Activated B cell treated with CpG ODN at 0.5 μM for 24 hours (primary cell): ENCODE measurements at regions of chr5 and their contacts with region 1.

Region 1: DNA sequence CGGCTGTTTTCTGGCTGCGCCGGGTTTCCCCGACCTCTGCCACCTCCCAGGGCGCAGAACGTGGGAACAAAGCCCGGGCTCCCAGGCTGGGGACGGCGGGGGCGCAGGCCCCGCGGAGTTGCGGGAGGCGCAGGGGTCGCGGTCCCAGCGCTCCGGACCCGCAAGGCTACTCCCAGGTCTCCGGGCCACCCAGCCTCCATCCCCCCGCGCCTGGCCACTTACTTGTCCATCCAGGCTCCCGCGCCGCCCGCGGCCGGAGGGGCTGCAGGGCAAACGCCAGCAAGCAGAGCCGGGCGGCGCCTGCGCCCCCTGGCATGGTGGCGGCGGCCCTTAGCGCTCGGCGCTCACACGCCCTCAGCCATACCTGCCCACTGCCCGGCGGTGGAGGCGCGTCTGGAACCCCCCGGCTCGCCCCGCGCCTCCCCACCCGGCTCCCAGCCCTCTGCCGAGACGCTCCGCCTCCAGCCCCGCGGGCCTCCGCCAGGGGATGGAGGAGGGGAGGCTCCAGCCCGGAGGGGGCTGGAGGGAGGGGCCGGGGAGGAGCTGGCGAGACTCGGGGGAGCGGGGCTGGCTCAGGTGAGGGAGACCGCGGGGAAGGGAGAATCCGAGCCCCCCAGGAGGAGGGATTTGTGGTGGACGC is at the start of gene ADAM19:
- DNase-seq: peak; percentile 70
- ATAC-seq: peak; percentile 56
- H3K4me3 Mint-ChIP-seq: peak within 1 kb of the TSS; percentile 99
- H3K27ac Mint-ChIP-seq: peak within 1 kb of the TSS; percentile 95
- H3K4me1 Mint-ChIP-seq: peaks cover 76% of the 10 kb centered on the region
- H3K27me3 Mint-ChIP-seq: no peaks in the 10 kb centered on the region
- CTCF ChIP-seq: no peak
- total RNA-seq, gene ADAM19: 115 and 136 TPM in 2 replicates

Region 2: DNA sequence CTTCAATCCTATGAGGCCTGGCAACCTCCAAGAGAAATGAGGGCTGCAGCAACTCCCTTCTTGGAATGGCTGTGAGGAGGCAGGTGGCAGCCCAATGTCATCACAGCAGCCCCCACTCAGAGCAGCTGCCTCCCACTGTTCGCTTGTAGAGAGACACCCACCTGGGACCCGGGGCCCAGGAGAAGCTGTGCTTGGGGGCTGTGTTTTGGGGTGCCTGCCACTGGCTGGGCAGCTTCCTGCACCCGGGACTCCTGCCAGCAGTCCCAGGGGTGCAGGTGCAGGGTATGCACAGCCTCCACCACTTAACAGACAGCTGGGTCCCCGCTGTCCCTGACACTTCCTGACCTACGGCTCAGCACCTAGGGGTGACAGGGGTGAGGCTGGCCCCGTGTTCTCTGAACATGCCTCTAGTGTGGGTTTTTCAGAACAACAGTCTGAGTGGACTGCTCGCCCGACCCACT is 89.2 kb before region 1 on chr5:
- CTCF ChIA-PET with region 1: interaction called, 3 read pairs
- POLR2A ChIA-PET with region 1: interaction called, 21 read pairs
- intact Hi-C with region 1: loop called (anchors 2 kb)
- DNase-seq: no peak
- ATAC-seq: peak; percentile 33
- H3K4me3 Mint-ChIP-seq: peak overlapping the region; percentile 56
- H3K27ac Mint-ChIP-seq: peak overlapping the region; percentile 95
- H3K4me1 Mint-ChIP-seq: peaks cover 86% of the 10 kb centered on the region
- H3K27me3 Mint-ChIP-seq: no peaks in the 10 kb centered on the region
- CTCF ChIP-seq: no peak

Region 3: GRCh38 chr5:157520911-157521703 is 54.4 kb before region 1 on chr5:
- CTCF ChIA-PET with region 1: no interaction called
- POLR2A ChIA-PET with region 1: interaction called, 11 read pairs
- intact Hi-C with region 1: no loop called
- DNase-seq: no peak
- ATAC-seq: no peak
- H3K4me3 Mint-ChIP-seq: peak overlapping the region; percentile 47
- H3K27ac Mint-ChIP-seq: peak overlapping the region; percentile 93
- H3K4me1 Mint-ChIP-seq: peaks cover 89% of the 10 kb centered on the region
- H3K27me3 Mint-ChIP-seq: no peaks in the 10 kb centered on the region
- CTCF ChIP-seq: no peak

Region 4: DNA sequence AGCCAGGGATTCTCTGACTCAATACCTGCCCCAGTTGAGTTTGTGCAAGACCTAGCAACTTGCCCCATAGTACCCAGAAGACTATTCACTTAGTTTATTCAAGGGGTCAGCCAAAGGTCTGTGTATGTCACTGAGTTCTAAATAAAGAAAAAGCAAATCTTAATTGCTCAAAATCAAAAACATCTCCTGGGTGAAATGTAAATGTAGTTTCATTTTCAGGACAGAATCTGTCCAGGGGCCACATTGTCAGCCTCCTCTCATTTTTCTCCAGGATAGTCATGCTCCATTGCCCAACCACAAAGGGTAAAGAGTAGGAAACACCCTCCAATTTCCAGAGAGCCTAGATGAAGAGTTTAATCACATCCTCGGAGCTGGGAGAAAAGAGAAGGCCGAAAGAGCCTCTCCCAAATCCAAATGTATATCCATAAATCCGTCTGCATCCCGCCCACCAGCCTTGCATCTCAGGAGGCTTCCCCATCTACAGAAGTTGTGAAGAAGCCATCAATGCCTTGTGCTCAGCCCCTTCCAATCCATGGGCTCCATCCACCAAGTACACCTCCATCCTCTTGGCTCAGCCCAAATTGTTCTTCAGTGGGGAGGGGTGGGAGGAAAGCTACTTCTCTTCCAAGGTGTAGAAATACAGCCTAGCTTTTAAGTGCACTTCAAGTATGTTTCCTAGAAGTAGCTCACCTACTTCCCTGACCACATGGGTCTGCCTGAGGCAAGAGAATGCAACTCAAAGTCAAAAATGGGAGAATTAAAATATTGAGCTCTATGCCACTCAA is 26.8 kb before region 1 on chr5:
- CTCF ChIA-PET with region 1: interaction called, 5 read pairs
- POLR2A ChIA-PET with region 1: interaction called, 15 read pairs
- intact Hi-C with region 1: no loop called
- DNase-seq: no peak
- ATAC-seq: peak; percentile 22
- H3K4me3 Mint-ChIP-seq: peak overlapping the region; percentile 48
- H3K27ac Mint-ChIP-seq: peak overlapping the region; percentile 83
- H3K4me1 Mint-ChIP-seq: peaks cover 93% of the 10 kb centered on the region
- H3K27me3 Mint-ChIP-seq: no peaks in the 10 kb centered on the region
- CTCF ChIP-seq: no peak

Region 5: DNA sequence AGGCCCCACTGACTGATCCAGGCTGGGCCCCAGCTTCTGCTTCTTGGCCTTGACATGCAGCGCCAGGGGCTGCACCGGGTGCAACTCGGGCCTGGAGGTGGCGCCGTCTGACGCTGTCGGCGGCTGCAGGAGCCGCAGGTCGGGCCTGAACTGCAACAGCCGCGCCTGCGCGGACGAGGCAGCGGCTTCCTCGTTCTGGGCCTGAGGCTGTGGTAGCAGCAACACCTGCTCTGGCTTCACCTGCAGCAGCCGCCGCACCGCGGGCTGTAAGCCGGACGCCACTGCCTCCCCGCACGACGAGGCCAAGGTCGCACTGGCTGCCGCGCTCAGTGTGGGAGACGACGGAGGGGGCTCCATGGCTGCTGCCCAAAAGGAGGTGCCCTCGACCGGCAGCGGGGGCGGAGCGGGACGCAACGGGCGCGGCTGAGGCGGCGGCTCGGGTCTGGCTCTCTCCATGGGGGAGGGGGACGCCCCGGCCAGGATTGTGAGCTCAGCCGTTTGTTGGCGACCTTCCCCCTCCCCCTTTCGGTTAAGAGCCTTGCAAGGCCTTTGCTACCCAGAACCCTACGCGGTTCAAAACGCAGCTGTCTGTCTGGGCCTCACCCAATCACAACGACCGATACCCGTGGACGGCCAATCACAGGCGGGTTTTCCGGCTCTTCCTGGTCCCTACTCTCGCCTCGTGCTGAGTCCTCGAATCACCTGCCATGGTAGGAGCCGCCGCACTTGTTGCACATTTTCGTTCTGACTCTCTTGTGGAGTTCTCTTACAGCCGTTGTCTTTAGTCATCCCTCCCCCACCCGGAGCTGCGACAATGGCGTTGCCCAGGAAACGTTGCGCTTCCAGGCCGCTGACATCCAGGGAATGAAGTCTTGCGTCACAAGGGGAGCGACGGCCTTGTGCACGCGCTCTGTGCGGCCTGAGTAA is 76.4 kb after region 1 on chr5 and contains the start of gene SOX30:
- CTCF ChIA-PET with region 1: interaction called, 3 read pairs
- POLR2A ChIA-PET with region 1: interaction called, 6 read pairs
- intact Hi-C with region 1: loop called (anchors 1 kb)
- DNase-seq: peak; percentile 77
- ATAC-seq: peak; percentile 97
- H3K4me3 Mint-ChIP-seq: peak within 1 kb of the TSS; percentile 84
- H3K27ac Mint-ChIP-seq: peak within 1 kb of the TSS; percentile 86
- H3K4me1 Mint-ChIP-seq: peaks cover 50% of the 10 kb centered on the region
- H3K27me3 Mint-ChIP-seq: no peaks in the 10 kb centered on the region
- CTCF ChIP-seq: no peak
- total RNA-seq, gene SOX30: 0.37 and 0.47 TPM in 2 replicates

Region 6: GRCh38 chr5:157731272-157732129 is 156.0 kb after region 1 on chr5 and contains the start of gene THG1L:
- CTCF ChIA-PET with region 1: no interaction called
- POLR2A ChIA-PET with region 1: interaction called, 7 read pairs
- intact Hi-C with region 1: loop called (anchors 2 kb)
- DNase-seq: peak; percentile 93
- ATAC-seq: peak; percentile 84
- H3K4me3 Mint-ChIP-seq: peak within 1 kb of the TSS; percentile 98
- H3K27ac Mint-ChIP-seq: peak within 1 kb of the TSS; percentile 99
- H3K4me1 Mint-ChIP-seq: peaks cover 46% of the 10 kb centered on the region
- H3K27me3 Mint-ChIP-seq: no peaks in the 10 kb centered on the region
- CTCF ChIP-seq: no peak
- total RNA-seq, gene THG1L: 25.6 and 28.9 TPM in 2 replicates